PC-9 (cell line): ENCODE measurements at regions of chrX and their contacts with region 1.

Region 1: GRCh38 chrX:15471016-15471415 is 22.1 kb downstream of the PIR start:
- DNase-seq: peak; percentile 40 to 64
- H3K4me3 ChIP-seq: no peak overlapping the region
- H3K27ac ChIP-seq: peak overlapping the region; percentile 28
- H3K4me1 ChIP-seq: peaks cover 36% of the 10 kb centered on the region
- H3K27me3 ChIP-seq: no peaks in the 10 kb centered on the region
- CTCF ChIP-seq: peak; percentile 76

Region 2: GRCh38 chrX:15242899-15243555 is 228.0 kb before region 1 on chrX:
- CTCF ChIA-PET with region 1: no interaction called
- POLR2A ChIA-PET with region 1: no interaction called
- intact Hi-C with region 1: no loop called
- DNase-seq: peak; percentile 9 to 40
- H3K4me3 ChIP-seq: no peak overlapping the region
- H3K27ac ChIP-seq: no peak overlapping the region
- H3K4me1 ChIP-seq: no peaks in the 10 kb centered on the region
- H3K27me3 ChIP-seq: no peaks in the 10 kb centered on the region
- CTCF ChIP-seq: peak; percentile 68

Region 3: GRCh38 chrX:15416133-15416993 is 54.7 kb before region 1 on chrX:
- CTCF ChIA-PET with region 1: no interaction called
- POLR2A ChIA-PET with region 1: no interaction called
- intact Hi-C with region 1: loop called (anchors 10 kb)
- DNase-seq: no peak
- H3K4me3 ChIP-seq: no peak overlapping the region
- H3K27ac ChIP-seq: no peak overlapping the region
- H3K4me1 ChIP-seq: no peaks in the 10 kb centered on the region
- H3K27me3 ChIP-seq: no peaks in the 10 kb centered on the region
- CTCF ChIP-seq: no peak

Region 4: DNA sequence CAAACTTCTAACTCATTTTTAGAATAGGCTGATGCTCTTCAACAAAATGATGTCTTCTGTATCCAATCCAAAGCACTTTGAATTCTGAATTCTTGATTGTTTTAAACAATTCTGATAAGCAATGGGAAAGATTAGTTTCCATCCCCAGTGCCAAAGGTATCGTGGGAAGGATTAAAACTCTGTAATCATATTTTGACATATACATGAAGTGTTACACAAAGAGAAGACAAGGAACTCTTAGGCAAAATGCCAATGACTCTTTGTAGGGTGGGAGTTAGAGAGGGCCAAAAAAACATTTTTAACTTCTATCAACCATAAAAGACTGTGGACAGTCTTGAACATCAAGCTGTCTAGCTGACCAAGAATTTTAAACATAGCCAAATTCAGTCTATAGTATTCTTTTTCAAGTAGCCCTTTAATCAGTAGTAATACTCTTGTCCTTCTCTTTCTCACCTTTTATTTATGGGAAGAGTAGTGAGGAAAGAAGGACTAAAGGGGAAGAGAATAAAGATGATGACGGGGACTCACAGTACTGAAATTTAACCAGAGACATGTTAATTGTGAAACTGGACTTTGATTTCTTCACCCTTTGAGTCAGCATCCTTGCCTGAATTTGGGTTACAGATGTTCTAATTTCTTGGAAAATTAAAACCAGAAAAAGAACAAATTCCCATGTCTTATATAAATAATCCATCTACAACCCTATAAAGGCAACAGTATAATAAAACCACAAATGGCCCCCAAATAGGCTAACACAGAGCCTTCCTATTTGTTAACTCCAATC is 35.0 kb before region 1 on chrX:
- CTCF ChIA-PET with region 1: no interaction called
- POLR2A ChIA-PET with region 1: no interaction called
- intact Hi-C with region 1: no loop called
- DNase-seq: no peak
- H3K4me3 ChIP-seq: no peak overlapping the region
- H3K27ac ChIP-seq: no peak overlapping the region
- H3K4me1 ChIP-seq: no peaks in the 10 kb centered on the region
- H3K27me3 ChIP-seq: no peaks in the 10 kb centered on the region
- CTCF ChIP-seq: no peak

Region 5: DNA sequence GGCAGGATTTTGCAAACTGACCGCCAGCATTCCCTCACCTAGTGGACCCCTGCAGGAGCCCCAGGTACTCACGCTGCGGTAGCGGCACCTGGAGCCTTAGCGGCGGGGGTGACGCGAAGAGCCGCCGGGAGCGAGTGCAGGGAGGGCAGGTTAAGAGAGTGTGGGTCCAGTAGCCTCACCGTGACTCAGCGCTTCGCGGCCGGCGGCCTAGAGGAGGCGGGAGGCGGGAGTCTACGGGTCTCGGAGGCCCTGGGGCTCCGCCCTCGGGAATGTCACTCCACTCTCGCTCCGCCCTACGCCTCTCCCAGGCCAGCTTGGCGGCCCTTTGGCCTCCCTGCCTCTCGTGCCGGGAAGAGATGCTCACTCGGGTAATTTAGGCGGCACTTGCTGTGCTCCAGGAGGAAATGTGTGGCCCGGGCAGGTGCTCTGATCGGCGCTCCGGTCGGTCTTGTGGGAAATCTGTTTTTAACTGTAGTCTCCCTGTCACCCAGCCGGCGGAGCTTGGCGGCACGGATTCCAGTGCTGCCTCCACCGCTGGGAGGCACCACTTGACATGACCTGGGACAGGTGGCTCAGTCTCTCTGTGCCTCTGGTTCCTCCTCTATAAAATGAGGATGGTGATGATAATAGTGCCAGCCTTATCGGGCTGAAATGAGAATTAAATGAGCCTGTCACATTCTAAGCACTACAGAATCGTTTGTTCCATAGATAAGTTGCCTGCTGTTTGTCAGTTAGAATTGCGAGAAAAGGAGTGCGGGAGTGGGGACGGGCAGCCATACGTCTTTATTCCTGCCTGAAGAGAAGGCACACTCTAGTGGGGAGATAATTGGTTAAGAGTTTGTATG is 22.3 kb after region 1 on chrX and contains the start of gene PIR:
- CTCF ChIA-PET with region 1: no interaction called
- POLR2A ChIA-PET with region 1: no interaction called
- intact Hi-C with region 1: loop called (anchors 2 kb)
- DNase-seq: peak; percentile 82 to 94
- H3K4me3 ChIP-seq: peak within 1 kb of the TSS; percentile 86
- H3K27ac ChIP-seq: peak within 1 kb of the TSS; percentile 94
- H3K4me1 ChIP-seq: peaks cover 23% of the 10 kb centered on the region
- H3K27me3 ChIP-seq: no peaks in the 10 kb centered on the region
- CTCF ChIP-seq: peak; percentile 40; the same call in 1 of the 2 replicates
- total RNA-seq, gene PIR: 177 and 197 TPM in 2 replicates